Mucosa of descending colon (tissue), 3 donors: ENCODE measurements at regions of chr6 and their contacts with region 1.

Region 1: GRCh38 chr6:87929843-87930288 is 117.8 kb upstream of the SPACA1 start:
- DNase-seq: peak; percentile 70 to 92 (median 87)
- ATAC-seq: peak; percentile 97
- H3K4me3 ChIP-seq: no peak overlapping the region
- H3K4me1 ChIP-seq: no peaks in the 10 kb centered on the region
- CTCF ChIP-seq: peak; percentile 77

Region 2: GRCh38 chr6:87870556-87870955 is 59.3 kb before region 1 on chr6:
- intact Hi-C with region 1: no loop called
- DNase-seq: no peak
- ATAC-seq: no peak
- H3K4me3 ChIP-seq: no peak overlapping the region
- H3K4me1 ChIP-seq: no peaks in the 10 kb centered on the region
- CTCF ChIP-seq: no peak

Region 3: DNA sequence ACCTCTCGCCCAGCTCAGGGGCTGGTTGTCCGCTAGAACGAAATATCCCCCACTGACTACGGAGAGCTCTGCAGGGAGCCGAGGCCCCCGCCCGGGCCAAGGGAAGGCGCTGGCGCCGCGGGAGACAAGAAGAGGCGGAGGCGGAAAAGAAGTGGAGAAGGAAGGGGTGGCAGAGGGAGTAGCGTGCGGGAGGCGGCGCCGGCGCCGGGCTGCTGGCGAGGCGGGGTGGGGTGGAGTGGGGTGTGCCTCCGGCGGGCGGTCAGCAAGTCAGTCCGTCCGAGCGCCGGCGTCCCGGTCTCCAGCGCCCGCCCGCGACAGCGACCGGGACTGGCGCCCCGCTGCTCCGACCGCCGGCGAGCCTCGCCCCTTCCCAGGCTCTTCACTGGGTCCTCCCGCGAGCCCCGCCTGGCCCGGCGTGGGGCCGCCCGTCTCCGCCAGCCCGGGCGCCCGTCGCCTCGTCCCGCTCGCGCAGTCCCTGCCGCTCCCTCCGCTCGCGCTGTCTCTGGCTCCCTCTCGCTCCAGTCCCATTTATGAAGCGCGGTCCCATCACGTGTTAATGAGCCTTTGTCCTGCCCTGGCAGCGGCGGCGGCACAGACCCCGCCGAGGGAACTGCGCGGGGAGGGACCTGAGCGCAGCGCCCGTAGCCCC is 236.1 kb after region 1 on chr6 and contains the start of gene CNR1:
- intact Hi-C with region 1: loop called (anchors 10 kb)
- DNase-seq: peak; percentile 81 to 90 (median 86)
- ATAC-seq: peak; percentile 93
- H3K4me3 ChIP-seq: peak within 1 kb of the TSS; percentile 9
- H3K4me1 ChIP-seq: peaks cover 12% of the 10 kb centered on the region
- CTCF ChIP-seq: no peak
- total RNA-seq, gene CNR1: 3.5 to 17.3 (median 4.1) TPM

Region 4: GRCh38 chr6:88780714-88781389 is 851.0 kb after region 1 on chr6:
- intact Hi-C with region 1: loop called in 1 of 2 experiments (anchors 5 kb)
- DNase-seq: peak in 1 of 3 donors; percentile 29
- ATAC-seq: peak; percentile 78
- H3K4me3 ChIP-seq: no peak overlapping the region
- H3K4me1 ChIP-seq: no peaks in the 10 kb centered on the region
- CTCF ChIP-seq: peak; percentile 66